ENCODE measurements at regions of chr3 and their contacts with region 1.

Region 1: GRCh38 chr3:187738331-187739093 is 6.8 kb downstream of the BCL6 start:
- DNase-seq: peak; percentile 94
- ATAC-seq: peak; percentile 42
- H3K4me3 ChIP-seq: peak overlapping the region; percentile 93
- H3K27ac ChIP-seq: peak overlapping the region; percentile 56
- H3K4me1 ChIP-seq: peaks cover 35% of the 10 kb centered on the region
- H3K27me3 ChIP-seq: no peaks in the 10 kb centered on the region
- CTCF ChIP-seq: peak; percentile 88

Region 2: DNA sequence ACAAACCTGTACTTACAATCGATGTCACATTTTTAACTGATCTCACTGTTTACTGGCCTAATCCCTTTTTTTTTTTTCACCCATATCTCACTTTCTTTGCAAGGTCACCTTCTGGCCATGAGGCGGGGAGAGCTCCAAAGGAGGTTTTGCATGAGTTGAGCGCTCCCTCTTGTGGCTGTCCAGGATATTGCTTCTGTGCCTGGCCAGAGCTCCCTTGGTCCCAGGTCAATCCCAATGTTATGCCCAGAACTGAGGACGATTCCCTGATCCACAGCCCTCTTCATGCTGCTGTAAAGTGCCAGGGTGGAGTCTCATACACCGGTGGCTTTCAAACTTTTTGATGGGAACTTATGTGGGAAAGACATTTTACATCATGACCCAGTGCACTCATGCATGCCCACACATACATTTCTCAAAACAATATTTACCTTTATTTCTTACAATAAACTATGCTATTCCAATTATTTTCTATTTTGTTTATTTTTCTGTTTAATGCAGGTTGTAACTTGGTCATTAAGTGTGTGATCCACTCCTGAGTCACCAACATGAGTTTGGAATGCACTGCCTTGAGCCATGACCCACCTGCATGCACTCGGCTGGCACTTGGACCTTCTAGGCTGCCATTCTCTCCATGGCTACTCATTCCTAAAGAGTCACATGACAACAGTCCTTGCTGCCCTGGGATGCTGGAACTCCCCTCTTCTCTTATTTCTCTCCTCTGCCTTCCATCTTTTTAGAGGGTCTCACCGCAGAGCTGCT is 58.7 kb before region 1 on chr3:
- CTCF ChIA-PET with region 1: interaction called, 10 read pairs
- POLR2A ChIA-PET with region 1: no interaction called
- intact Hi-C with region 1: no loop called
- DNase-seq: peak; percentile 87
- ATAC-seq: peak; percentile 87
- H3K4me3 ChIP-seq: no peak overlapping the region
- H3K27ac ChIP-seq: no peak overlapping the region
- H3K4me1 ChIP-seq: no peaks in the 10 kb centered on the region
- H3K27me3 ChIP-seq: peaks cover 41% of the 10 kb centered on the region
- CTCF ChIP-seq: peak; percentile 92

Region 3: GRCh38 chr3:188026191-188026968 is 287.9 kb after region 1 on chr3:
- CTCF ChIA-PET with region 1: no interaction called
- POLR2A ChIA-PET with region 1: no interaction called
- intact Hi-C with region 1: no loop called
- DNase-seq: no peak
- ATAC-seq: no peak
- H3K4me3 ChIP-seq: no peak overlapping the region
- H3K27ac ChIP-seq: no peak overlapping the region
- H3K4me1 ChIP-seq: peaks cover 9% of the 10 kb centered on the region
- H3K27me3 ChIP-seq: no peaks in the 10 kb centered on the region
- CTCF ChIP-seq: no peak

Region 4: GRCh38 chr3:188230962-188231361 is 492.4 kb after region 1 on chr3:
- CTCF ChIA-PET with region 1: no interaction called
- POLR2A ChIA-PET with region 1: no interaction called
- intact Hi-C with region 1: loop called (anchors 1 kb)
- DNase-seq: peak; percentile 85
- ATAC-seq: peak; percentile 65
- H3K4me3 ChIP-seq: no peak overlapping the region
- H3K27ac ChIP-seq: peak overlapping the region; percentile 78
- H3K4me1 ChIP-seq: peaks cover 51% of the 10 kb centered on the region
- H3K27me3 ChIP-seq: no peaks in the 10 kb centered on the region
- CTCF ChIP-seq: no peak

Region 5: DNA sequence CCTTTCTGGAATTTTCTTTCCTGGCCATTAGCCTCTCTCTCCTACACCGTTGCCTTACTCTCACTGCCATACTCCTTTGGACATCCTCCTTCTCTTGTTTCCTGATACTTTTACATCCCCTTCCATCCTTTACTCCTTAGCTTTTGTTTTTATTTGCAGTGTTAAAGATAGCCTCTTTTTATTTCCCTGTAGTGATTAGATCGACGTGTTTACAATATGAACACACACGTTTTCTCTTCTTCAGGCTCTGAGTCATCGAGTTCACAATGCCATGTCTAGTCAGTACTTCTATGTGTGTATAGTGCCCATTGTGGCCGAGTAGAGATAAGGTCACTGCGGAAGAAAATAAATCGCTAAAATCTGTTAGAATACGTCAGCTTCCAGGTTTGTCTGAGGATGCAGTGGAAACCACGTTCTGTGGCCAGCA is 623.9 kb after region 1 on chr3:
- CTCF ChIA-PET with region 1: interaction called, 3 read pairs
- POLR2A ChIA-PET with region 1: no interaction called
- intact Hi-C with region 1: loop called (anchors 2 kb)
- DNase-seq: peak; percentile 95
- ATAC-seq: peak; percentile 95
- H3K4me3 ChIP-seq: no peak overlapping the region
- H3K27ac ChIP-seq: peak overlapping the region; percentile 48
- H3K4me1 ChIP-seq: peaks cover 29% of the 10 kb centered on the region
- H3K27me3 ChIP-seq: no peaks in the 10 kb centered on the region
- CTCF ChIP-seq: peak; percentile 58

Region 6: DNA sequence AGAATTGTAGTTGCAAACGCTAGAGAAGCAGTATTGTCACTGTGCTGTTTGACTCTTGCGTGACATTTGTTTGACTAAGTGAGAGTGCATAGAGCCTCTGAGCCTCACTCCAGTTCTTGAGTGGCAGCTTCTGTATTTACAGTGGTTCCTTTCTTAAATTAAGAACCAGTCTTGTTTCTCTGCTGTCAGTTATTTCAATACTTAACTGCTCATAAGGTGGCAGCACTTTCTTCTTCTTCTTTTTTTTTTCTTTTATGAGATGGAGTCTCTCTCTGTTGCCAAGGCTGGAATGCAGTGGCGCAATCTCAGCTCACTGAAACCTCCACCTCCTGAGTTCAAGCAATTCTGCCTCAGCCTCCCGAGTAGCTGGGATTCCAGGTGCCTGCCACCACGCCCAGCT is 787.5 kb after region 1 on chr3:
- CTCF ChIA-PET with region 1: no interaction called
- POLR2A ChIA-PET with region 1: interaction called, 7 read pairs
- intact Hi-C with region 1: loop called (anchors 5 kb)
- DNase-seq: peak; percentile 39
- ATAC-seq: no peak
- H3K4me3 ChIP-seq: no peak overlapping the region
- H3K27ac ChIP-seq: no peak overlapping the region
- H3K4me1 ChIP-seq: peaks cover 32% of the 10 kb centered on the region
- H3K27me3 ChIP-seq: no peaks in the 10 kb centered on the region
- CTCF ChIP-seq: no peak; the same call in 1 of the 2 replicates

Region 7: DNA sequence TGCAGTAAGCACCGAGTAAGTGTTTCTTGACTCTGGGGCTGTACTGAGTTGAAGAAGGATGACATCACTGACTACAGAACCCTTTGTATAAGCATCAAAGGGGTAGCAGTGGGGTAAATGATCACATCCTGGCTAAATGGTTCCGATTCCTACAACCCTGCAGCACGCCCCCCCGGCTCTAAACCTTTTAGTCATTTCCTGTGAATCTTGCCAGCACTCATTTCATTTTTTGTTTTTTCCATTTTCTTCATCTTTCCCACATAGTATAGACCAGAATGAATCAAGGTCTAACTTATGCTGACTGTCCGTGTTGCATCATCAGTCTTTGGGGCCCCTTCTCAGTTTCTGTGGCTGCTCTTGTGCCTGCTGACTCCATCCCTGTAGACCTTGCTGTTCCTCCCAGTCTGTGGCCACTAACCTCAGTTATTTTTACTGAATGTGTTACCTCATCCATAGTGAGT is 1050.1 kb after region 1 on chr3:
- CTCF ChIA-PET with region 1: interaction called, 3 read pairs
- POLR2A ChIA-PET with region 1: interaction called, 14 read pairs
- intact Hi-C with region 1: no loop called
- DNase-seq: peak; percentile 45
- ATAC-seq: peak; percentile 68
- H3K4me3 ChIP-seq: no peak overlapping the region
- H3K27ac ChIP-seq: no peak overlapping the region
- H3K4me1 ChIP-seq: peaks cover 10% of the 10 kb centered on the region; the same call in 1 of the 2 replicates
- H3K27me3 ChIP-seq: no peaks in the 10 kb centered on the region
- CTCF ChIP-seq: no peak

Region 8: GRCh38 chr3:189041482-189042090 is 1303.1 kb after region 1 on chr3:
- CTCF ChIA-PET with region 1: no interaction called
- POLR2A ChIA-PET with region 1: no interaction called
- intact Hi-C with region 1: loop called (anchors 2 kb)
- DNase-seq: peak; percentile 75
- ATAC-seq: peak; percentile 84
- H3K4me3 ChIP-seq: no peak overlapping the region
- H3K27ac ChIP-seq: no peak overlapping the region
- H3K4me1 ChIP-seq: no peaks in the 10 kb centered on the region
- H3K27me3 ChIP-seq: no peaks in the 10 kb centered on the region
- CTCF ChIP-seq: peak; percentile 86